Tibial artery (tissue), 4 donors: ENCODE measurements at regions of chr18 and their contacts with region 1.

Region 1: DNA sequence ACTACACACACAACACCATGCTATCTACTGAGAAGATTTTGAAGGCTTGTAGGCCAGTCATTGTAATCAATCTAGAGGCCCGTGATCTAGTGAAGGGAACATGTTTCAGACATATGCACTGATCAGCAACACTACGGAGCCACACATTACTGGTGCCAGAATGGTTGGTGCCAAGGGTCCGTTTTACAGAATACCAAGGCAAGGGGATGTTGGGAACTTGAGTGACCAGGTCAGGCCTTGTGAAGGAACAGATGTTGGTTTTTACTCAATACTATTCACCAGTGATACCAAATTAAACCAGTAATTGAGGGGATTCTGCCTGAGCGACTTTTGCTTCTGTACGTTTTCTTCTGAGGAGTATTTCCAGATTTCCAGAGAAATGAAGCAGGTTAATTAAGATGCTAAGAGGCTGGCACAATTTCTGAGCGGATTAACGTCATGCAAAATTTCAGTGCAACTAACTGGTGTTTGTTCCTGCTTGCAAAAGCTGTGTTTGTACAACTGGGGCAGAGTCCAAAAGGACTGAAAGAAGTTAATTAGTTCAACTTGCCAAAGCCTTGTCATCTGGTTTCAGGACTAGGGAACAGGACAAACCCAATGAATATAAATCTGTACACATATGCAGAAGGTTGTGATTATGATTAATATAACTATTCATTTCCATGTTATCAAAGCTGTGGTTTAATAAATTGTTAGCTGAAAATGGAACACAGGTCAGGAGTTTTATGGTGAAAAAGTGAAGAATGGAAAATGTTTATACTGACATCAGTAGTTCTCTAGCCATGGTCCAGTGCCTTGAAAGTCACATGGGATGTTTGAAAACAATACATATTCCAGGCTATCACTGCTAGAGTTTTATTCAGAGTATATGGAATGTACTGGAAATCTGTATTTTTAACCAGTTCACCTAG is 432.1 kb upstream of the DCC start:
- DNase-seq: no peak
- H3K4me3 ChIP-seq: no peak overlapping the region
- H3K27ac ChIP-seq: no peak overlapping the region
- H3K4me1 ChIP-seq: no peaks in the 10 kb centered on the region
- H3K27me3 ChIP-seq: no peaks in the 10 kb centered on the region
- CTCF ChIP-seq: no peak

Region 2: GRCh38 chr18:51921862-51922261 is 13.9 kb after region 1 on chr18:
- intact Hi-C with region 1: loop called (anchors 2 kb)
- DNase-seq: no peak
- H3K4me3 ChIP-seq: no peak overlapping the region
- H3K27ac ChIP-seq: no peak overlapping the region
- H3K4me1 ChIP-seq: no peaks in the 10 kb centered on the region
- H3K27me3 ChIP-seq: no peaks in the 10 kb centered on the region
- CTCF ChIP-seq: no peak

Region 3: GRCh38 chr18:52531836-52532235 is 623.9 kb after region 1 on chr18:
- intact Hi-C with region 1: no loop called
- DNase-seq: no peak
- H3K4me3 ChIP-seq: no peak overlapping the region
- H3K27ac ChIP-seq: no peak overlapping the region
- H3K4me1 ChIP-seq: no peaks in the 10 kb centered on the region
- H3K27me3 ChIP-seq: no peaks in the 10 kb centered on the region
- CTCF ChIP-seq: no peak